Heart right ventricle (tissue), 16 donors: ENCODE measurements at regions of chr1 and their contacts with region 1.

Region 1: GRCh38 chr1:201570886-201571624 is 32.1 kb downstream of the NAV1 start:
- DNase-seq: peak in 1 of 2 donors; percentile 28
- ATAC-seq: peak in 7 of 8 donors; percentile 22 to 61 (median 34)
- H3K4me3 ChIP-seq: no peak overlapping the region
- H3K27ac ChIP-seq: peak overlapping the region in 6 of 10 donors; percentile 13 to 70 (median 50)
- H3K4me1 ChIP-seq: peaks cover 15 to 82% (median 59%) of the 10 kb centered on the region in 9 donors
- H3K27me3 ChIP-seq: no peaks in the 10 kb centered on the region
- CTCF ChIP-seq: no peak

Region 2: DNA sequence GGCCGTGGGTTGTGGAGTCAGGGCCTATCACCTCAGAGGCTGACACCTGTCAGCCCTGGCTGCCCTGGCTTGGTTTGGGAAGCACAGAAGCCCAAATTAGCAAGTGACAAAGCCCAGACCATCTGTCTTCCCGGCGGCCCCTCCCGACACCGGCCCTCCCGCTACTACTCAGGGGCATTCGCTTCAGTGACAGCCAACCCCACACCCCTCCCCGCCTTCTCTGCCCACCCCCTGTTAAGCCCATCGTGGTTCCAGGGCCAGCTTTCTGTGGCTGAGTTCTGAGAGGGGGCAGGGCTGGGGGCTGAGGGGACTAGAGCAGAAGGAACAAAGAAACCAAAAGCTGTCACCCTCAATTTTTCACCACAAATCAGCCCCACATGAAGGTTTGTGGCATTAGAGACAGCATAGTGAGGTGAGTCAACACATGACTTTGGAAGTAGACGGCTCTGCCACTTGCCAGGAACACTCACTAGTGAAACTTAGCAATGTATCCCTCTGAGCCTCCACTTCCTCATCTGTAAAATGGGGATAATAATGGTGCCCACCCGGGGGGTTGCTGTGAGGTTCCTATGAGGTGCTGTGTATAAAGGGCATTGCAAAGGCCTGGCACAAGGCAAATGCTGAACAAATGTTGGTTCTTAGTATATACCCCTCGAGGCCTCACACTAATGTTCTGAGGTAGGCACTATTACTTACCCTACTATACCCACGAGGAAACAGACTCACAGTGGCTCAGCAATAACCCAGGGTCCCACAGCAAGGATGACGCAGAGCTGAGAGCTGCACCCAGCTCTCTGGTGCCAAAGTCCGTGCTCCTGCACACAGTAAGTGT is 144.4 kb before region 1 on chr1:
- intact Hi-C with region 1: no loop called
- DNase-seq: peak; percentile 42 to 59
- ATAC-seq: peak; percentile 60 to 86 (median 80)
- H3K4me3 ChIP-seq: no peak overlapping the region
- H3K27ac ChIP-seq: peak overlapping the region in 7 of 10 donors; percentile 33 to 78 (median 66)
- H3K4me1 ChIP-seq: peaks cover 0 to 16% (median 0%) of the 10 kb centered on the region in 9 donors
- H3K27me3 ChIP-seq: no peaks in the 10 kb centered on the region
- CTCF ChIP-seq: no peak

Region 3: DNA sequence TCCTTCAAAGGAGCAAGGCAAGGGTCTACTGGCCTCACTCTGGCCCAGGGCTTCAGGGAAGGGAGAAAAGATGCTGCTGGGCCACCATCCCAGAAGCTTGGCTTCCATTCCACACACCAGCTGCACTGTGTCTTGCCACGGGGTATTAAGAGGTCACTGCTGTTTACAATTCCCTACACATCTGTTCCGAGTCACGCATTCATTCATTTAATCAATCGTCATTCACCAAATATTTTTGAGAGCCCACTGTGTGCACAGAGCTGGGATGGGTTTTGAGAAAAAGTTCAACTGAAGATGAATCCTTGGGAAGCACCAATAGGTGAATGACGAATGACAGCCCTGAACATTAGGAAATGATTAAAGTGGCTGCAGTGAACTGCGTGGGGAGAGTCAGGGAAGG is 69.6 kb after region 1 on chr1:
- intact Hi-C with region 1: loop called in 5 of 10 experiments (anchors 5 to 10 kb)
- DNase-seq: peak; percentile 51 to 67
- ATAC-seq: peak in 7 of 8 donors; percentile 50 to 77 (median 76)
- H3K4me3 ChIP-seq: no peak overlapping the region
- H3K27ac ChIP-seq: peak overlapping the region; percentile 16 to 80 (median 68)
- H3K4me1 ChIP-seq: peaks cover 27 to 70% (median 50%) of the 10 kb centered on the region in 9 donors
- H3K27me3 ChIP-seq: no peaks in the 10 kb centered on the region
- CTCF ChIP-seq: no peak